Uterus (tissue), 4 donors: ENCODE measurements at regions of chr1 and their contacts with region 1.

Region 1: GRCh38 chr1:9770298-9770697 is 53.5 kb downstream of the CLSTN1 start:
- DNase-seq: no peak
- H3K4me3 ChIP-seq: no peak overlapping the region
- H3K27ac ChIP-seq: no peak overlapping the region
- H3K4me1 ChIP-seq: no peaks in the 10 kb centered on the region
- H3K27me3 ChIP-seq: no peaks in the 10 kb centered on the region
- CTCF ChIP-seq: no peak
- POLR2A ChIP-seq: no peak

Region 2: DNA sequence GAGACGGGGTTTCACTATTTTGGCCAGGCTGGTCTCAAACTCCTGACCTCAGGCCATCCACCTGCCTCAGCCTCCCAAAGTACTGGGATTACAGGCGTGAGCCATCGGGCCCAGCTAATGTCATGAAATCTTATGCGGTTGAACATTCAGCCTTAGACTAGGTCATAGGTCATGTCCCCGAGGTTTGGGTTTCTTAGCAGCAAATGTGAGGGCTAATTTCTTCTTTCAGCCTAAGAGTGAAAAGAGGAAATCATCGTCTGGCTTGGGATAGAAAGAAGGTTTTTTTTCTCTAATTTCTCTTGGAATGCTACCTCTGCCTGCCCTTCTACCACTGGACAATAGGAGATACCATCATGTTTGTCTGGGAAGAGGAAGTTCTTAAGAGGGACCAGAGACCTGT is 136.8 kb before region 1 on chr1:
- intact Hi-C with region 1: no loop called
- DNase-seq: no peak
- H3K4me3 ChIP-seq: no peak overlapping the region
- H3K27ac ChIP-seq: no peak overlapping the region
- H3K4me1 ChIP-seq: no peaks in the 10 kb centered on the region
- H3K27me3 ChIP-seq: no peaks in the 10 kb centered on the region
- CTCF ChIP-seq: no peak
- POLR2A ChIP-seq: no peak

Region 3: GRCh38 chr1:9724706-9725476 is 45.4 kb before region 1 on chr1:
- intact Hi-C with region 1: loop called (anchors 5 kb)
- DNase-seq: no peak
- H3K4me3 ChIP-seq: no peak overlapping the region
- H3K27ac ChIP-seq: no peak overlapping the region
- H3K4me1 ChIP-seq: no peaks in the 10 kb centered on the region
- H3K27me3 ChIP-seq: no peaks in the 10 kb centered on the region
- CTCF ChIP-seq: peak; percentile 45 to 69 (median 64)
- POLR2A ChIP-seq: no peak